ENCODE measurements at regions of chr11 and their contacts with region 1.

Region 1: DNA sequence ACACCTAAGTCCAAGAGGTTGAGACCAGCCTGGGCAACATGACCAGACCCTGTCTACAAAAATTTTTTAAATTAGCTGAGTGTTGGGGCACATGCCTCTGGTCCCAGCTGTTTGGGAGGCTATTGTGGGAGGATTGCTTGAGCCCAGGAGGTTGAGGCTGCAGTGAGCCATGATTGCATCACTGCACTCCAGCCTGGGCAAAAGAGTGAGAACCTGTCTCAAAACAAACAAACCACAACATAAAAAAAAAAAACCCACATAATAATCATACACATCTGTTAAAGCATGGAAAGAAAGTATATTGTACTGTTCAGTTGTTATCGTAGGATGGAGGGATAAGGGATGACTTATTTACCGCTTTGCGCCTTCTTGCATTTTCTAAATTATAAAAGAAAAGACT is 35.9 kb upstream of the GRK2 start:
- DNase-seq: no peak
- H3K4me3 ChIP-seq: no peak overlapping the region
- H3K4me3 Mint-ChIP-seq: no peak overlapping the region
- H3K27ac ChIP-seq: no peak overlapping the region
- H3K27ac Mint-ChIP-seq: peak overlapping the region in 1 of 7 donors; percentile 20
- H3K4me1 ChIP-seq: no peaks in the 10 kb centered on the region
- H3K4me1 Mint-ChIP-seq: peaks cover 4% of the 10 kb centered on the region
- H3K27me3 ChIP-seq: no peaks in the 10 kb centered on the region
- H3K27me3 Mint-ChIP-seq: peaks cover 0 to 3% (median 0%) of the 10 kb centered on the region in 3 donors
- CTCF ChIP-seq: no peak

Region 2: GRCh38 chr11:67118801-67119584 is 111.4 kb before region 1 on chr11 and contains the start of gene KDM2A:
- intact Hi-C with region 1: no loop called
- DNase-seq: peak; percentile 98 to 100 (median 99)
- H3K4me3 ChIP-seq: peak within 1 kb of the TSS; percentile 94 to 100 (median 99)
- H3K4me3 Mint-ChIP-seq: peak within 1 kb of the TSS; percentile 97
- H3K27ac ChIP-seq: peak within 1 kb of the TSS; percentile 91 to 94
- H3K27ac Mint-ChIP-seq: peak within 1 kb of the TSS; percentile 95 to 97 (median 97)
- H3K4me1 ChIP-seq: peaks cover 57 to 68% of the 10 kb centered on the region in 2 donors
- H3K4me1 Mint-ChIP-seq: peaks cover 53% of the 10 kb centered on the region
- H3K27me3 ChIP-seq: no peaks in the 10 kb centered on the region
- H3K27me3 Mint-ChIP-seq: peaks cover 0 to 2% (median 0%) of the 10 kb centered on the region in 3 donors
- CTCF ChIP-seq: peak; percentile 25
- polyA plus RNA-seq, gene KDM2A: 2.6 to 98.9 (median 3.9) TPM

Region 3: DNA sequence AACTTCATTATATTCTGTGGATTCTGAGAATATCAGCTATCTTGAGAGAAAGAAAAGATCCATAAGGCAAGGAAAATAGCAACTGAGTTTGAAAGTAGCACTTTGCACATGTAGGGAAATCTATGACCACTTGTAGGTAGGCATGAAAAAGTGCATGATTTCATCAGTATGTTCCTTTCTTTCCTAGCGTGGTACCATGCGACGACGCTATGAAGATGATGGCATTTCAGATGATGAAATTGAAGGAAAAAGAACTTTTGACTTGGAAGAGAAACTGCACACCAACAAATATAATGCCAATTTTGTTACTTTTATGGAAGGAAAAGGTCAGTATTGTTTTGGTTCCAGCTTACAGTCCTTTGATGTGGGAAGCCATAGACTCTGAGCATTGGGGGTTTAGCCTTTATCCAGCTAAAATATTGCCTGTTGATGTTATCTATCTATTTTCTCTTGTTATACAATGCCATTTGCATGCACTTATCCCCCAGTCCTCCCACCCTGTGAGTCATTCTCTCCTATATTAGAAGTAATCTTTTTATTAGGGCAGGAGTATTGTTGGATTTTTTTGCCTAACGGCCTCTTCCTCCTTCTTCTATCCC is 50.4 kb before region 1 on chr11:
- intact Hi-C with region 1: loop called in 1 of 2 experiments (anchors 5 kb)
- DNase-seq: no peak
- H3K4me3 ChIP-seq: no peak overlapping the region
- H3K4me3 Mint-ChIP-seq: no peak overlapping the region
- H3K27ac ChIP-seq: peak overlapping the region in 1 of 2 donors; percentile 2
- H3K27ac Mint-ChIP-seq: no peak overlapping the region
- H3K4me1 ChIP-seq: no peaks in the 10 kb centered on the region
- H3K4me1 Mint-ChIP-seq: no peaks in the 10 kb centered on the region
- H3K27me3 ChIP-seq: no peaks in the 10 kb centered on the region
- H3K27me3 Mint-ChIP-seq: no peaks in the 10 kb centered on the region
- CTCF ChIP-seq: no peak

Region 4: DNA sequence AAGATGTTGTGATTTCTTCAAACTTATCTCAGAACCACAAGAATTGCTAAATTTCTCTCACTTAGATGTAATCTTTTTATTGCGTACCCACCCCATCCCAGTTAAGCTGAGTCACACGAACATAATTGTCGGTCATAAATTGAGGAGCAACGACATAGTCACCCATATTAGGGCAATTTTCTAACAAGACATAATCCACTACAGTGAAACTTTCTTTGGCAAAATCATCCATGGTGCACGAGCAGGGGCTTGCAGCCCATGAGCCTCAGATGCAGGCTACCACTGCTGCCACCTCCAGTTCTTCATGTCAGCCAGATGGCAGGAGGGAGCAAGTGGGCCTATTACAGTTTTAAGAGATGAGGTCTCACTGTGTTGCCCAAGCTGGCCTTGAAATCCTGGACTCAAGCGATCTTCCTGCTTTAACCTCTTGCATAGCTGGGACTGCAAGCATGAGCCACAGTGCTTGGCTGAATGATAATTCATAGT is 34.4 kb before region 1 on chr11:
- intact Hi-C with region 1: no loop called
- DNase-seq: peak; percentile 19 to 37 (median 36)
- H3K4me3 ChIP-seq: peak overlapping the region in 1 of 3 experiments; percentile 25
- H3K4me3 Mint-ChIP-seq: no peak overlapping the region
- H3K27ac ChIP-seq: peak overlapping the region; percentile 63 to 82
- H3K27ac Mint-ChIP-seq: peak overlapping the region; percentile 42 to 90 (median 85)
- H3K4me1 ChIP-seq: peaks cover 31 to 36% of the 10 kb centered on the region in 2 donors
- H3K4me1 Mint-ChIP-seq: peaks cover 33% of the 10 kb centered on the region
- H3K27me3 ChIP-seq: no peaks in the 10 kb centered on the region
- H3K27me3 Mint-ChIP-seq: no peaks in the 10 kb centered on the region
- CTCF ChIP-seq: no peak